Naive thymus-derived CD4-positive, alpha-beta T cell (primary cell): ENCODE measurements at regions of chr1 and their contacts with region 1.

Region 1: GRCh38 chr1:32650752-32651460 is at the start of gene RBBP4:
- DNase-seq: peak; percentile 95 to 99 (median 98)
- ATAC-seq: peak; percentile 91
- H3K4me3 ChIP-seq: peak within 1 kb of the TSS; percentile 87
- H3K4me3 Mint-ChIP-seq: peak within 1 kb of the TSS; percentile 91 to 99 (median 94)
- H3K27ac ChIP-seq: peak within 1 kb of the TSS; percentile 86
- H3K27ac Mint-ChIP-seq: peak within 1 kb of the TSS; percentile 97 to 100 (median 99)
- H3K4me1 ChIP-seq: peaks cover 42 to 45% of the 10 kb centered on the region in 2 donors
- H3K4me1 Mint-ChIP-seq: peaks cover 28 to 73% (median 60%) of the 10 kb centered on the region in 7 donors
- H3K27me3 ChIP-seq: no peaks in the 10 kb centered on the region
- H3K27me3 Mint-ChIP-seq: peaks cover 0 to 2% (median 0%) of the 10 kb centered on the region in 5 donors
- total RNA-seq, gene RBBP4: 130 to 280 (median 162) TPM

Region 2: DNA sequence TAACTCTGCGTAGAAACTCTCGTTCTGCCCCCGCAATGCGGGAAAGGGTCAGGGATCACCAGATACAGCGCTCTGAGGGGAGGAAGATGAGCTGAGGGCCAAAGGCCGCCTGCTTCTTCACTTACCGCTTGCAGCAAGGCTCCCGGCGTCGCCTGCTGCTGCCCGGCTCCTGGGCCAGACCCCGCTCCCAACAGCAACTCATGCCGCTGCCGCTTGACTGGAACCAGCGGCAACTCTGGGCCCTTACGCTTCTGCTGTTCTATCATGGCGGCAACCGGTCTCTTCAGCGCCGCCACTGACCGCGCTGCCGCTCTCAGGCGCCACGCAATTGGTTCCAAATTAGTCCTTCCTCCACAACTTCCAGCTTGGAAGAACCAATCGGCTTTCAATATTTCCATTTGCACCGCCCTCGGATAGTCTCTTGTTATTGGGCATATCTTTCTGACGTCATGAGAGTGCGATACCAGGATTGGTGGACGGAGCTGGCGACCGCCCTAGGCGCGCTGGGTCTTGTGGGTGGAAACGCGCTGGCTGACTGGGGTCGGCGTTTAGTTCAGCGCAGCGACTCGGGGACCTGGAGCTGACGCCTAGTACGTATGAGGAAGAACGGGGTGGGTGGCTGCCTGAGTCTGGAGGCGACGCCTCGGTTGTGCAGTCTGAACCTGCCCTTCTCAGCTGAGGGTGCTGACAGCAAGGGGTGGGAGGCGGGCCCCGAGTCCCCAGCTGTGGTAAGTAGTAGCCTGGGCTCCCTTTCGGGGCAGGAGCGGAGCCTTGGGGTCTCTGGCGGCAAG is 1354.2 kb before region 1 on chr1 and contains the starts of genes SNRNP40 and ZCCHC17:
- CTCF ChIA-PET with region 1: no interaction called
- POLR2A ChIA-PET with region 1: no interaction called
- intact Hi-C with region 1: loop called in 1 of 2 experiments (anchors 2 kb)
- DNase-seq: peak; percentile 73 to 99 (median 98)
- ATAC-seq: peak; percentile 97
- H3K4me3 ChIP-seq: peak within 1 kb of the TSS; percentile 89
- H3K4me3 Mint-ChIP-seq: no peak within 1 kb of the TSS
- H3K27ac ChIP-seq: peak within 1 kb of the TSS; percentile 92
- H3K27ac Mint-ChIP-seq: peak within 1 kb of the TSS in 1 of 9 donors; percentile 84
- H3K4me1 ChIP-seq: peaks cover 18 to 24% of the 10 kb centered on the region in 2 donors
- H3K4me1 Mint-ChIP-seq: peaks cover 12 to 41% (median 27%) of the 10 kb centered on the region in 7 donors
- H3K27me3 ChIP-seq: no peaks in the 10 kb centered on the region
- H3K27me3 Mint-ChIP-seq: no peaks in the 10 kb centered on the region
- total RNA-seq, gene SNRNP40: 53.5 to 88.5 (median 62.1) TPM
- total RNA-seq, gene ZCCHC17: 10.3 to 23.8 (median 20.1) TPM

Region 3: GRCh38 chr1:32179443-32180185 is 471.3 kb before region 1 on chr1 and contains the start of gene TXLNA:
- CTCF ChIA-PET with region 1: no interaction called
- POLR2A ChIA-PET with region 1: no interaction called
- intact Hi-C with region 1: loop called in 1 of 2 experiments (anchors 1 kb)
- DNase-seq: peak; percentile 80 to 93 (median 86)
- ATAC-seq: peak; percentile 91
- H3K4me3 ChIP-seq: peak within 1 kb of the TSS; percentile 89
- H3K4me3 Mint-ChIP-seq: peak within 1 kb of the TSS; percentile 86 to 94 (median 91)
- H3K27ac ChIP-seq: peak within 1 kb of the TSS; percentile 89
- H3K27ac Mint-ChIP-seq: peak within 1 kb of the TSS; percentile 84 to 98 (median 92)
- H3K4me1 ChIP-seq: peaks cover 17 to 21% of the 10 kb centered on the region in 2 donors
- H3K4me1 Mint-ChIP-seq: peaks cover 22 to 45% (median 38%) of the 10 kb centered on the region in 7 donors
- H3K27me3 ChIP-seq: no peaks in the 10 kb centered on the region
- H3K27me3 Mint-ChIP-seq: no peaks in the 10 kb centered on the region
- total RNA-seq, gene TXLNA: 16.7 to 83.3 (median 36.3) TPM

Region 4: GRCh38 chr1:32336958-32337675 is 313.8 kb before region 1 on chr1:
- CTCF ChIA-PET with region 1: no interaction called
- POLR2A ChIA-PET with region 1: no interaction called
- intact Hi-C with region 1: no loop called
- DNase-seq: peak in 3 of 9 donors; percentile 38 to 72 (median 70)
- ATAC-seq: peak; percentile 74
- H3K4me3 ChIP-seq: no peak overlapping the region
- H3K4me3 Mint-ChIP-seq: peak overlapping the region; percentile 60 to 86 (median 78)
- H3K27ac ChIP-seq: peak overlapping the region; percentile 24
- H3K27ac Mint-ChIP-seq: peak overlapping the region in 8 of 9 donors; percentile 2 to 83 (median 70)
- H3K4me1 ChIP-seq: peaks cover 20 to 33% of the 10 kb centered on the region in 2 donors
- H3K4me1 Mint-ChIP-seq: peaks cover 36 to 46% (median 42%) of the 10 kb centered on the region in 7 donors
- H3K27me3 ChIP-seq: no peaks in the 10 kb centered on the region
- H3K27me3 Mint-ChIP-seq: peaks cover 0 to 1% (median 0%) of the 10 kb centered on the region in 5 donors

Region 5: DNA sequence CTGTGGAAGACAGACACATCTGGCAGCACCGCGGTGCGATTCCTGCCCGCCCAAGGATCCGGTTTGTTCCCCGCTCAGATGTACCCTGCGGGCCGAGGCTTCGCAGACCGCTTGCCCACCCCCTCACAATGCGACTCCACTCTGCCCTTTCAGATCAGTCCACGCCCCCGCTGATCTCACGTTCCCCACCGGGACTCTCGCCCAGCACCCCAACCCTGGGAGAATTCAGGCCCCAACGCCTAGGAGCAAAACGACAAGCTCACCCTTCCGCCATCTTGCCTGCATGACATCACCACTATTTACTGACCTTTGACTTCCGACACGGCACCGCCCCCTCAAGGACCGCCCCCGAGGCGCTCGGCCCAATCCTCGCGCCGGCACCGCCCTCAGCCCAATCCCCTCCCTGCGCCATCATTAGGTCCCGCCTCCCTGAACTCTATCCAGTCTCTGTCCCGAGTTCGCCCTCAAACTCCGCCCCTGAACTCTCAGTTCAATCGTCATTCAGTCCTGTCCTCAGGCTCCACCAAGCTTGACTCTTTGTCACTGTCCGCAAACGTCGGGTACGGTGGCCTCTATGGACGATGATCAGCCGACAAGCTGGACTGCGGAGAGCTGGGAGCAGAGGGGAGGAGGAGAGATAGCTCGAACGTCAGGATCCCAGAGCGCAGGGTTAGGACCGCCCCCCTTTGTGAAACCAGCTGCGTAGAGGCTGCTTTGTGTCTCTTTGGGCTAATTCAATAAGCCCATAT is 256.6 kb before region 1 on chr1 and contains the start of gene BSDC1:
- CTCF ChIA-PET with region 1: no interaction called
- POLR2A ChIA-PET with region 1: interaction called, 10 read pairs
- intact Hi-C with region 1: loop called (anchors 1 kb)
- DNase-seq: peak; percentile 94 to 99 (median 98)
- ATAC-seq: peak; percentile 99
- H3K4me3 ChIP-seq: peak within 1 kb of the TSS; percentile 90
- H3K4me3 Mint-ChIP-seq: peak within 1 kb of the TSS in 9 of 10 donors; percentile 92 to 100 (median 99)
- H3K27ac ChIP-seq: peak within 1 kb of the TSS; percentile 95
- H3K27ac Mint-ChIP-seq: peak within 1 kb of the TSS; percentile 94 to 100 (median 98)
- H3K4me1 ChIP-seq: peaks cover 15 to 30% of the 10 kb centered on the region in 2 donors
- H3K4me1 Mint-ChIP-seq: peaks cover 4 to 40% (median 23%) of the 10 kb centered on the region in 7 donors
- H3K27me3 ChIP-seq: no peaks in the 10 kb centered on the region
- H3K27me3 Mint-ChIP-seq: peaks cover 0 to 19% (median 0%) of the 10 kb centered on the region in 5 donors
- total RNA-seq, gene BSDC1: 51.7 to 186 (median 121) TPM

Region 6: GRCh38 chr1:32801096-32801715 is 150.3 kb after region 1 on chr1:
- CTCF ChIA-PET with region 1: no interaction called
- POLR2A ChIA-PET with region 1: no interaction called
- intact Hi-C with region 1: loop called in 1 of 2 experiments (anchors 1 kb)
- DNase-seq: peak in 8 of 9 donors; percentile 16 to 57 (median 38)
- ATAC-seq: peak; percentile 80
- H3K4me3 ChIP-seq: no peak overlapping the region
- H3K4me3 Mint-ChIP-seq: peak overlapping the region; percentile 22 to 85 (median 56)
- H3K27ac ChIP-seq: peak overlapping the region; percentile 16
- H3K27ac Mint-ChIP-seq: peak overlapping the region; percentile 22 to 88 (median 77)
- H3K4me1 ChIP-seq: peaks cover 32 to 49% of the 10 kb centered on the region in 2 donors
- H3K4me1 Mint-ChIP-seq: peaks cover 20 to 52% (median 45%) of the 10 kb centered on the region in 7 donors
- H3K27me3 ChIP-seq: no peaks in the 10 kb centered on the region
- H3K27me3 Mint-ChIP-seq: no peaks in the 10 kb centered on the region

Region 7: GRCh38 chr1:33080885-33081553 is 430.1 kb after region 1 on chr1 and contains the start of gene AZIN2:
- CTCF ChIA-PET with region 1: no interaction called
- POLR2A ChIA-PET with region 1: no interaction called
- intact Hi-C with region 1: loop called in 1 of 2 experiments (anchors 2 kb)
- DNase-seq: peak; percentile 94 to 99 (median 95)
- ATAC-seq: peak; percentile 99
- H3K4me3 ChIP-seq: peak within 1 kb of the TSS; percentile 68
- H3K4me3 Mint-ChIP-seq: peak within 1 kb of the TSS; percentile 81 to 88 (median 86)
- H3K27ac ChIP-seq: peak within 1 kb of the TSS; percentile 66
- H3K27ac Mint-ChIP-seq: peak within 1 kb of the TSS; percentile 6 to 91 (median 72)
- H3K4me1 ChIP-seq: peaks cover 14 to 15% of the 10 kb centered on the region in 2 donors
- H3K4me1 Mint-ChIP-seq: peaks cover 20 to 40% (median 35%) of the 10 kb centered on the region in 7 donors
- H3K27me3 ChIP-seq: no peaks in the 10 kb centered on the region
- H3K27me3 Mint-ChIP-seq: peaks cover 0 to 30% (median 0%) of the 10 kb centered on the region in 5 donors
- total RNA-seq, gene AZIN2: 5.3 to 9.6 (median 9.0) TPM